Sciatic nerve (tissue), 2 donors: ENCODE measurements at regions of chr15 and their contacts with region 1.

Region 1: GRCh38 chr15:64731012-64731806 is 44.2 kb downstream of the RBPMS2 start:
- DNase-seq: peak; percentile 92
- ATAC-seq: peak; percentile 77

Region 2: DNA sequence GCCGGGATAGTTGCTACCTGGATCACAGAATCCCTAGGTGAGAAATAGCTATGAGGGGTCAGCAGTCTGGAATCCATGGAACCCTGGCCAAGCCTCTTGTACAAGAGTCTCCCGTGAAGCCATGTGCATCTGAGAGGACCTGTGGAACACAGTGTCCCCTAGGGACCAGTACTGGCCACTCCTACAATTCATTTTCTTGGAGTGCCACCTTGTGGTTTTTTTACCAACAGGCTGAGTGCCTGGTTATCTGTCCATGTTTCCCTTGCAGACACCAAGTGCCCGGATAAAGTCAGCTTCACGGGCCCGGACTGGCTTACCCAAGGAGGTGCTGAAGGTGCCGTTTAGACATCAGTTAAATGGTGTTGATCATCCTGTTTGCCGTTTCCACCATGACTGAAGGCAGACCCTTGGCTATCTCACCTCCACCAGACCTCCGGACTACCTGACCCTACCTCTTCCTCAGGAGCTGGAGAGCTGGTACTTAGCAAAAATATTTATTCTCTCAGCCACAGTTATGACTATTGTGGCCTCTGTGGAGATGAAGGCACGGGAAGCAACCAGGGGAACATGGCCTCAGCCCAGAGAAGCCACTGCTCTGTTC is 49.7 kb before region 1 on chr15:
- intact Hi-C with region 1: loop called (anchors 2 kb)
- DNase-seq: no peak
- ATAC-seq: peak; percentile 65

Region 3: DNA sequence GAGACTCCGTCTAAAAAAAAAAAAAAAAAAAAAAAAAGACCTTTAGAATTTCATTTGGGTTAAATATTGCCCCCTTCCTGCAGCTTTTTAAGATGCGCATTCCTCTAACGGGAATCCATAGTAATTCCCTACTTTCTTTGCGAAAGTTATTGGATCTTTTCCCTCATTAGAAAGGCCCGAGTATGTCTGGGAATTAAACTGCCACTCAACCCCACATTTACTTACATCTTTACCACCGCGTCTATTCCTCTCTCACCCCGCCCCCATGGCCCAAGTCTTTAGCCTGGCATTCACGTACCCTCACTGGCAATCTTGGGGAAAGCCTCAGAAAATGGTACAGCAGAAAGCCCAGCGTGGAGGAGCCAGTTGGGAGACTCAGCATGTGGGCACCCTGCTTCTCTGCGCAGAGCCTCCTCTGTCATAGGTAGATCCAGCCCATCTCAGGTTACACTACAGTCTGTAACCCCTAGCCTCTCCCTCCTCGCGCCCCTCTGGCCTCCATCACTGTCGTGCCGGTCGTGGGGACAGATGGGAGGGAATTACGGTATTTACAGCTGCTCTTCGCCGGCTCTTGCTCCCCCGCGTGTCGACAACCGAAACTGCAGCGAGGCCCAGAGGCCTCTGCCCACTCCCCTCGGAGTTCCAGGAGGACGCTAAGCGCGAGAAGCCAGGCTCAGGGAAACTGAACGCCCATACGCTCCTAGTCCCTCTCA is 174.1 kb after region 1 on chr15:
- intact Hi-C with region 1: loop called (anchors 10 kb)
- DNase-seq: peak; percentile 89
- ATAC-seq: peak; percentile 91